ENCODE measurements at regions of chr14 and their contacts with region 1.

Region 1: GRCh38 chr14:102333795-102334705 is 14.5 kb downstream of the ZNF839 start:
- DNase-seq: no peak
- CTCF ChIP-seq: no peak

Region 2: DNA sequence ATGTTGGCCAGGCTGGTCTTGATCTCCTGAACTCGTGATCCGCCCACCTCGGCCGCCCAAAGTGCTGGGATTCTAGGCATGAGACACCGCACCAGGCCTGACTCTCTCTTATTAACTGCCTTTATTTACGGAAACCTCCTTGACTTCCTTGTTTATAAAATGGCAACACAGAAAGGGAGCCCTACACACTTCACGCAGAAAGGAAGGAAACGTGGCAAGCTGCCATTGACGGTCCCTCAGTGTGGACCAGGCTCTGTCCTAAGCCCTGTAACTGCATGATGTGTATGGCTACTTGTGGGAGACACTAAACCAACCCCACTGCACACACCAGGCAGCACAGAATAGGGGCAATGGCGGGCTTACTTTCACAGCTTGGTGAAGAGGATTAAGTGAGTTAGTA is 17.0 kb after region 1 on chr14:
- CTCF ChIA-PET with region 1: interaction called, 16 read pairs
- POLR2A ChIA-PET with region 1: no interaction called
- DNase-seq: no peak
- CTCF ChIP-seq: no peak

Measured in GM10248 (cell line).